Endothelial cell of umbilical vein (primary cell): ENCODE measurements at regions of chr9 and their contacts with region 1.

Region 1: GRCh38 chr9:91433180-91433579 is 9.5 kb upstream of the NFIL3 start:
- DNase-seq: peak; percentile 85
- H3K4me3 ChIP-seq: no peak overlapping the region
- H3K27ac ChIP-seq: no peak overlapping the region
- H3K4me1 ChIP-seq: peaks cover 5% of the 10 kb centered on the region
- H3K27me3 ChIP-seq: peaks cover 2 to 4% of the 10 kb centered on the region in 2 experiments
- CTCF ChIP-seq: peak; percentile 51 to 53
- POLR2A ChIP-seq: no peak

Region 2: GRCh38 chr9:90985631-90986030 is 447.5 kb before region 1 on chr9:
- CTCF ChIA-PET with region 1: interaction called, 37 read pairs
- POLR2A ChIA-PET with region 1: no interaction called
- dilution Hi-C with region 1: no loop called
- intact Hi-C with region 1: loop called (anchors 2 kb)
- DNase-seq: peak; percentile 5
- H3K4me3 ChIP-seq: no peak overlapping the region
- H3K27ac ChIP-seq: no peak overlapping the region
- H3K4me1 ChIP-seq: peaks cover 7% of the 10 kb centered on the region
- H3K27me3 ChIP-seq: no peaks in the 10 kb centered on the region
- CTCF ChIP-seq: no peak
- POLR2A ChIP-seq: no peak

Region 3: GRCh38 chr9:91089405-91090129 is 343.6 kb before region 1 on chr9:
- CTCF ChIA-PET with region 1: interaction called, 14 read pairs
- POLR2A ChIA-PET with region 1: no interaction called
- dilution Hi-C with region 1: no loop called
- intact Hi-C with region 1: no loop called
- DNase-seq: peak; percentile 41
- H3K4me3 ChIP-seq: no peak overlapping the region
- H3K27ac ChIP-seq: no peak overlapping the region
- H3K4me1 ChIP-seq: no peaks in the 10 kb centered on the region
- H3K27me3 ChIP-seq: peaks cover 0 to 5% of the 10 kb centered on the region in 2 experiments
- CTCF ChIP-seq: peak in 1 of 2 donors; percentile 42
- POLR2A ChIP-seq: no peak

Region 4: DNA sequence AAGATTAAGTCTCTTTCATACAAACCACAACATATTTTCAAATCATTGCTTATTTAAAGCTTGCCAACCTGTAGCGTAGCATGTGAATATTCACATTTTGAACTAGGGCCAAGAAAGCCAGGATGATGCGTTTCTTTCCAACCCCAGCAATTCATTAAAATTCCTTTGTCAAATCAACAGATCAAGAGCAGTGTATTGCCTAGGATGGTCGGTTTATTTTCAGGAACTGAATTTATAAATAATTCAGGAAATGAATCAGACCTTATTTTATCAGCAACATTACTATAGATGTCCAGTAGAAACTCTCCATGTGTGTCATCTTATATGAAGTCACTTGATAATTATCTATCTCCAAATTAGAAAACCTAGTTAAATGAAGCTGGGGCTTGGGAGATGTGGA is 58.2 kb before region 1 on chr9:
- CTCF ChIA-PET with region 1: no interaction called
- POLR2A ChIA-PET with region 1: no interaction called
- dilution Hi-C with region 1: no loop called
- intact Hi-C with region 1: no loop called
- DNase-seq: peak; percentile 60
- H3K4me3 ChIP-seq: no peak overlapping the region
- H3K27ac ChIP-seq: no peak overlapping the region
- H3K4me1 ChIP-seq: peaks cover 20% of the 10 kb centered on the region
- H3K27me3 ChIP-seq: no peaks in the 10 kb centered on the region
- CTCF ChIP-seq: no peak
- POLR2A ChIP-seq: no peak